Calu3 (cell line): ENCODE measurements at regions of chr2 and their contacts with region 1.

Region 1: DNA sequence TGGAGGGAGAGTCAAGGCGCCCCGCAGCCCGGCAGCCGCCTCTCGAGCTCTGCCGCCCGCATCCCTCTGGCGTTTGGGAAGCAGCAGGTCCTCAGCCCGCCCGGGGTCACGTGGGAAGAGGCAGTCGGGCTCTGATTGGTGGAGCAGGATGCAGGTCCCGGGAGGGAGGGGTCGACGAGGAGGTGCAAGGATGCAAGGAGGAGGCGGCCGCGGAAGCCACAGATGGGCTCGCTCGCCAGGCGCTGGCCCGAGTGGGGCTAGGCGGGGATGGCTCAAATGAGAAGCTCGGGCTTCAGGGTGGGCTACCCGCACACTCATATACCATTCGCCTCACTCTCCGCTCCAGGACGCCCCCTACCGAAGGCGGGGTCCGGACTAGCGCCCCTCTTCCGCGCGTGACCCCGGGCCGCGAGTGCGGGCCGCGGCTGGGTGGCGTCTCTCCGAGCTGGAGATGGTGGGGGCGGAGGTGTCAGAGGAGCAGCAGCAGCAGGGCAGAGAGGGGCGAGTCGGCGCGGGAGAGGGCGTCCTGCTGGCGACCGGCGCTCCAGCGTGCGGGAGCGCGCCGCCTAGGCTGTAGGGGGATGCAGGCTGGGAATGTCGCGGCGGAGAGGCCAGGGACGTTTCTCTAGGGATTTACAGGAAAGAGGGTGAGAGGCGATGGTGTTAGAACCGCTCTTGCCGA is at the start of gene TMEFF2:
- DNase-seq: peak; percentile 80
- H3K4me3 Mint-ChIP-seq: peak within 1 kb of the TSS; percentile 91
- H3K27ac Mint-ChIP-seq: peak within 1 kb of the TSS; percentile 34
- H3K4me1 Mint-ChIP-seq: peaks cover 27% of the 10 kb centered on the region
- H3K27me3 Mint-ChIP-seq: peaks cover 58% of the 10 kb centered on the region
- CTCF ChIP-seq: no peak
- total RNA-seq, gene TMEFF2: 0.64 TPM in 1 of 2 replicates, not detected in the other

Region 2: GRCh38 chr2:192286093-192286701 is 91.2 kb after region 1 on chr2:
- CTCF ChIA-PET with region 1: no interaction called
- intact Hi-C with region 1: loop called (anchors 1 kb)
- DNase-seq: no peak
- H3K4me3 Mint-ChIP-seq: no peak overlapping the region
- H3K27ac Mint-ChIP-seq: no peak overlapping the region
- H3K4me1 Mint-ChIP-seq: peaks cover 8% of the 10 kb centered on the region
- H3K27me3 Mint-ChIP-seq: no peaks in the 10 kb centered on the region
- CTCF ChIP-seq: no peak

Region 3: DNA sequence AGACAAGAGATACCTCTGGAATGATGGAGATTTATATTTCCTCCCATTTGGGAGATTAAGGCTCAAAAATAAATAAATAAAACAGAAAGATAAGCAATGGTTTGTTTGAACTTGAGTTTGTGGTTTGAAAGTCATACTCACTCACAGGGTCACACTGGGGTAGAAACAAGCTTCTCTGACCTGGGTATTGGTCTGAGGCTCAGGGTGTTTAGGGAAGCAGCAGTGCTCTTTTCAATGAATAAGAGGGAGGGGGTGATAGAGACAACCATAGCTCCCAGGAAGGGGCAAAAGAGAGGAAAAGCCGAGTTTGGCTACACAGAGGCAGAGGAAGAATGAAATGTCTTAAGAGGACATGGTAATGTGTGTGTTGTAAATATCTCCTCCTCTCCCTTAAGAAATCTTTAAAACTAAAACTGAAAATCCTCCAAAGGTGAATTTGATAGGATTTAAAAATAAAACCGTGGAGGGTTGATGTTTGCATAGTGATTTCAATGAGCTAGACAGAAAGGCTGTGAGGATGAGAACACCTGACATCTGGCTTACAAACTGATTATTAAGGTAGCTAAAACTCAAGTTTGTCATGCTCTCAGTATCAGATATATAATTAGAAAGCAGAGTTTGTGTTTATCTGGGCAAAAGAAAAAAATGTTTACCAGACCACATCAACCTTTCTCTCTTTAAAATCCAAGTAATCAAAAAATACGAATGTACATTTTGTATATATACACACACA is 159.7 kb after region 1 on chr2:
- CTCF ChIA-PET with region 1: no interaction called
- intact Hi-C with region 1: loop called (anchors 5 kb)
- DNase-seq: no peak
- H3K4me3 Mint-ChIP-seq: no peak overlapping the region
- H3K27ac Mint-ChIP-seq: no peak overlapping the region
- H3K4me1 Mint-ChIP-seq: peaks cover 18% of the 10 kb centered on the region
- H3K27me3 Mint-ChIP-seq: no peaks in the 10 kb centered on the region
- CTCF ChIP-seq: no peak

Region 4: DNA sequence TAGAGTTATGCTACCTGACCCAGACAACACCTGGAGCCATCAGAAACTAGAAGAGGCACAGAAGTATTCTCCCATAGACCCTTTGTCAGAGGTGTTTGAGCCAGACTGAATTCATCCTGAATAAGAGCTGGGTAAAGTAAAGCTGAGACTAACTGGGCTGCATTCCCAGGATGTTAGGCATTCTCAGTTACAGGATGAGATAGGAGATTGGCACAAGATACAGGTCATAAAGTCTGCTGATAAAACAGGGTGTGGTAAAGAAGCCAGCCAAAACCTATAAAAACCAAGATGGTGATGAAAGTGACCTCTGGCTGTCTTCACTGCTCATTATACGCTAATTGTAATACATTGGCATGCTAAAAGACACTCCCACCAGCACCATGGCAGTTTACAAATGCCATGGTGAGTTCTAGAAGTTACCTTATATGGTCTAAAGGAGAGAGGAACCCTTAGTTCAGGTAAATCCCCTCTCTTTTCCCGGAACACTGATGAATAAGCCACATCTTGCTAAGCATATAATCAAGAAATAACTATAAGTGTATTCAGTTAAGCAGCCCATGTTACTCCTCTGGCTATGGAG is 364.6 kb after region 1 on chr2:
- CTCF ChIA-PET with region 1: no interaction called
- intact Hi-C with region 1: loop called (anchors 5 kb)
- DNase-seq: no peak
- H3K4me3 Mint-ChIP-seq: no peak overlapping the region
- H3K27ac Mint-ChIP-seq: no peak overlapping the region
- H3K4me1 Mint-ChIP-seq: peaks cover 17% of the 10 kb centered on the region
- H3K27me3 Mint-ChIP-seq: no peaks in the 10 kb centered on the region
- CTCF ChIP-seq: no peak

Region 5: DNA sequence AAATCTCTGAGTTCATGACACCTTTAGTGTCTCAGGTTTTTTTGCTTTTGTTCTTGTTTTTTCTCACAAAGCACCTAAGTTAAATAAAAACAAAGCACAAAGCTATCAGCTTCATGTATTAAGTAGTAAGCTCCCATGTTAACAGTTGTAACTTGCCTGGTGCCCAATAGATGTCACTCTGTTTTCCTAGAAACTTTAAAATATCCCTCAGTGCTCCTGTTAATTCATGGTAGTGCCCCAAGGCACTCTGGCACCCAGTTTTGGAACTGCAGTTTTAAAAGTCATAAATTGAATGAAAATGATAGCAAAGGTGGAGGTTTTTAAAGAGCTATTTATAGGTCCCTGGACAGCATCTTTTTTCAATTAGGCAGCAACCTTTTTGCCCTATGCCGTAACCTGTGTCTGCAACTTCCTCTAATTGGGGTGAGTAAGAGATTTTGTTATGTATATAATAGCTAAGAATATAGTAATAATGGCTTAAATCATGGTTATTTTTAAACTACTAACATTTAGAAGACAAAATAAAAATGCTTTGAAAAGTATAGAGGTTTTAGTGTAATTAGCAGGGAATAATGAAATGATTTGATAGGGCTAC is 554.7 kb after region 1 on chr2:
- CTCF ChIA-PET with region 1: no interaction called
- intact Hi-C with region 1: loop called (anchors 5 kb)
- DNase-seq: no peak
- H3K4me3 Mint-ChIP-seq: no peak overlapping the region
- H3K27ac Mint-ChIP-seq: no peak overlapping the region
- H3K4me1 Mint-ChIP-seq: no peaks in the 10 kb centered on the region
- H3K27me3 Mint-ChIP-seq: no peaks in the 10 kb centered on the region
- CTCF ChIP-seq: peak; percentile 30

Region 6: GRCh38 chr2:193231634-193232033 is 1036.6 kb after region 1 on chr2:
- CTCF ChIA-PET with region 1: no interaction called
- intact Hi-C with region 1: loop called (anchors 10 kb)
- DNase-seq: no peak
- H3K4me3 Mint-ChIP-seq: no peak overlapping the region
- H3K27ac Mint-ChIP-seq: no peak overlapping the region
- H3K4me1 Mint-ChIP-seq: no peaks in the 10 kb centered on the region
- H3K27me3 Mint-ChIP-seq: no peaks in the 10 kb centered on the region
- CTCF ChIP-seq: no peak